ENCODE measurements at regions of chr3 and their contacts with region 1.

Region 1: DNA sequence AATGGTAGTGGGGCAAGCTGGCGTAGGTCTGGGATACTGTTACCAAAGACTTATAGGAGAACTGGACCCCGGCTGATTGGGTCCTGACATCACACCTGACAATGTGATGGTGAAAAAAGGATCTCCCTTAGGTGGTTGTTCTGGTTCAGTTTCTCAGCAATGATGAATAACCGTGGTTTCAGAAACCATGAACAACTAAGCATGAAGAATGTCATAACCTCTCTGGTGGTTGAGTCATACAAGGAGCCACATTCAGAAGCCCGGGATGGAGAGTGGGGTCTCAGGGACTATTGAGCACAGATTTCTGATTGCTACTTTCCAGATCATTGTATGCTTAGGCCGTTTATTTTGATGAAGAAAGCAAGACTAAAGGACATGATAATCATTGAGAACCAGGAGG is 17.4 kb downstream of the GPR160 start:
- DNase-seq: peak; percentile 20
- ATAC-seq: peak; percentile 47
- H3K4me3 Mint-ChIP-seq: no peak overlapping the region
- H3K27ac Mint-ChIP-seq: no peak overlapping the region
- H3K4me1 Mint-ChIP-seq: peaks cover 35% of the 10 kb centered on the region
- H3K27me3 Mint-ChIP-seq: peaks cover 2% of the 10 kb centered on the region

Region 2: GRCh38 chr3:169863458-169863899 is 191.7 kb before region 1 on chr3:
- CTCF ChIA-PET with region 1: interaction called, 28 read pairs
- POLR2A ChIA-PET with region 1: no interaction called
- DNase-seq: peak; percentile 78
- ATAC-seq: peak; percentile 61
- H3K4me3 Mint-ChIP-seq: no peak overlapping the region
- H3K27ac Mint-ChIP-seq: no peak overlapping the region
- H3K4me1 Mint-ChIP-seq: peaks cover 26% of the 10 kb centered on the region
- H3K27me3 Mint-ChIP-seq: peaks cover 9% of the 10 kb centered on the region

Region 3: GRCh38 chr3:170037463-170038433 is 17.5 kb before region 1 on chr3 and contains the start of gene GPR160:
- CTCF ChIA-PET with region 1: interaction called, 16 read pairs
- POLR2A ChIA-PET with region 1: no interaction called
- DNase-seq: peak; percentile 86
- ATAC-seq: peak; percentile 87
- H3K4me3 Mint-ChIP-seq: peak within 1 kb of the TSS; percentile 78
- H3K27ac Mint-ChIP-seq: no peak within 1 kb of the TSS
- H3K4me1 Mint-ChIP-seq: peaks cover 25% of the 10 kb centered on the region
- H3K27me3 Mint-ChIP-seq: peaks cover 18% of the 10 kb centered on the region
- total RNA-seq, gene GPR160: 5.0 to 7.4 TPM

Region 4: GRCh38 chr3:170044795-170045244 is 10.4 kb before region 1 on chr3:
- CTCF ChIA-PET with region 1: interaction called, 16 read pairs
- POLR2A ChIA-PET with region 1: no interaction called
- DNase-seq: no peak
- ATAC-seq: no peak
- H3K4me3 Mint-ChIP-seq: no peak overlapping the region
- H3K27ac Mint-ChIP-seq: no peak overlapping the region
- H3K4me1 Mint-ChIP-seq: peaks cover 17% of the 10 kb centered on the region
- H3K27me3 Mint-ChIP-seq: peaks cover 7% of the 10 kb centered on the region